Activated T-helper 2 cell treated with anti-CD3 and anti-CD28 coated beads, Interferon-gamma antibody, Interleukin-2, Interleukin-4, amounts not matched to agents 10 μg/mL and 5 μg/mL and 100 μg/mL, durations not matched to agents 14 hours and 24 hours and 36 hours (primary cell): ENCODE measurements at regions of chr14 and their contacts with region 1.

Region 1: GRCh38 chr14:61103481-61104339 is 122.7 kb downstream of the SLC38A6 start:
- DNase-seq: peak; percentile 17
- H3K4me3 Mint-ChIP-seq: peak overlapping the region; percentile 26
- H3K27ac Mint-ChIP-seq: peak overlapping the region; percentile 85
- H3K4me1 Mint-ChIP-seq: peaks cover 32% of the 10 kb centered on the region
- H3K27me3 Mint-ChIP-seq: no peaks in the 10 kb centered on the region

Region 2: DNA sequence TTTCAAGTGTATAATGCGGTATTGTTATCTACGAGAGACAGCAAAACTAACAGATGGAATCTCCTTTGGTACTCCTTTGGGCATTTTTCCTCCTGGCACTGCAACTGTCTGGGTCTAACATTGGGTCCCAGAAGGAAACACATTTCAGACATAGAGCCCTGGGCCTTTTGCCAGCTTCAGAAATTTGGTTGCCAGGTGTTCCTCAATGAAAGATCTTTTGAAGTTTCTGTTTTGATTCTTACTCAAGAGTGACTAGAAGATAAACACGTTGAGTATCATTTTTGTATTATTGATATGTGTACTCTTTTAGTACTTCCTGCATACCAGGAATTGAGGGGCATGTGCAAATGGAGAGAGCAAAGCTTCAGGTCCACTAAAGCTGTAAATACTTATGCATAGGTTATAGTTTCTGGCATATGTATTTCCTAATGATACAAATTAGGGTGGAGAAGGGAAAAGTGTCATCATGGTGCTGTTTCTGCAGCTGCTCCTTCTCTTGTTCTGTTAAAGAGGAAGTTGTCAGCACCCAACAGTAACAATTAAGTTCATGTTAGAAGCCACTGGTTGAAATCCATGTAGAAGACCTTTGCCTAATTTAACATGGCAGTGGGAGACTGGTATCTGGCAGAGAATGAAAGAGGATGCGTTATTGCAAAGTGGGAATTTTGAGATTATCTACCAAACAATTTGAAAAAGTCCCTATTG is 69.1 kb before region 1 on chr14:
- intact Hi-C with region 1: loop called (anchors 2 kb)
- DNase-seq: no peak
- H3K4me3 Mint-ChIP-seq: no peak overlapping the region
- H3K27ac Mint-ChIP-seq: peak overlapping the region; percentile 40
- H3K4me1 Mint-ChIP-seq: peaks cover 23% of the 10 kb centered on the region
- H3K27me3 Mint-ChIP-seq: no peaks in the 10 kb centered on the region

Region 3: GRCh38 chr14:61444215-61444768 is 340.6 kb after region 1 on chr14:
- intact Hi-C with region 1: loop called (anchors 5 kb)
- DNase-seq: peak; percentile 65
- H3K4me3 Mint-ChIP-seq: peak overlapping the region; percentile 40
- H3K27ac Mint-ChIP-seq: peak overlapping the region; percentile 89
- H3K4me1 Mint-ChIP-seq: peaks cover 89% of the 10 kb centered on the region
- H3K27me3 Mint-ChIP-seq: no peaks in the 10 kb centered on the region